Naive thymus-derived CD4-positive, alpha-beta T cell (primary cell): ENCODE measurements at regions of chr4 and their contacts with region 1.

Region 1: DNA sequence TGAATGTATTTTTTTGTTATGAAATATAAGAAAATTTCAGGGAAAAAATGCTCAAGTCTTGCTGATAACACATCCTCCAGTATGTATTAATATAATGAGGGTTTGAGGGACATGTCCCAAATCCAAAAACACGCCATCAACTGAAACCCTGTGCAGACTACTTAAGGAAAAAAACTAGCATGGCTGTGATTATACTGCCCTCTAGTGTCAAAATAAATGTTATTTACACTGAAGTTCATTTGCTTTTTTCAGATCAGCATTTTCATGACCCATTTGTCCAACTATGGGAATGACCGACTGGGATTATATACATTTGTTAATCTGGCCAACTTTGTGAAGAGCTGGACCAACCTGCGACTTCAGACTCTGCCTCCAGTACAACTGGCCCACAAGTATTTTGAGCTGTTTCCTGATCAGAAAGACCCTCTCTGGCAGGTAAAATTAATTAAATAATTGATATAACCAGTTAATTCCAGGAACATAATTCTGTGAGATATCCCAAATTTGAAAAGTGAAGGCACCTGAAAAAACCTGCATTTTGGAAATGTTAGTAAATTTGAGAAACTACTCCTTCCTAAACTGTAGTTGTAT is 128.5 kb downstream of the PRSS12 start:
- DNase-seq: peak in 4 of 9 donors; percentile 12 to 35 (median 28)
- ATAC-seq: peak; percentile 49
- H3K4me3 ChIP-seq: no peak overlapping the region
- H3K4me3 Mint-ChIP-seq: no peak overlapping the region
- H3K27ac ChIP-seq: no peak overlapping the region
- H3K27ac Mint-ChIP-seq: no peak overlapping the region
- H3K4me1 ChIP-seq: no peaks in the 10 kb centered on the region
- H3K4me1 Mint-ChIP-seq: no peaks in the 10 kb centered on the region
- H3K27me3 ChIP-seq: no peaks in the 10 kb centered on the region
- H3K27me3 Mint-ChIP-seq: peaks cover 0 to 17% (median 6%) of the 10 kb centered on the region in 5 donors

Region 2: DNA sequence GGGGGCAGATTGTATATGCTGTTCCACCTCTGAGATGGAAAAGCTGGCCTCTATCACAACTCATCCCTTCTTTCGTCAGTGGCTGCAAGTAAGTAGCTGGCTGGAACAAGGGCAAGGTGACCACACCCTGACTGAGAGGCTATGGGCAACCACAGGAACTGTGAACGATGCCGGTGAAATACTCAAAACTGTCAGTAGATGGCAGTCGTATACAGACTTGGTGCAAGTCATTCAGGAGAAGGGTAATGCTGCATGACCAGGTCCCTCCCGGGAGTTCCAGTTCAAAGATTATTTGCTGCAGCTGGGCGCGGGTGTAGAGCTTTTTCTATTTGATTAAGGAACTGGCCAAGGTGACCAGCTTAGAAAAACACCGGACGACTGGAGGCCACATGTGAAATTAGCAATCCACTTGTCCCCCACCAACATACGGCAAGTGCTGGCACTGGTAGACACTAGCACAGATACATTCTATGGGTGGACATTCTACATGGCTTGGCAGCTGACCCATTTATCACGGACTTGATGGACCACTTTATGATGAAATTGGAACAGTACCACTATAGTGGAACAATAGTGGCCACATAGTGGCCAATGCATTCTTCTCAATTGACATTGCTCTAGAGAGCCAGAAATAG is 1865.6 kb before region 1 on chr4:
- CTCF ChIA-PET with region 1: no interaction called
- POLR2A ChIA-PET with region 1: no interaction called
- intact Hi-C with region 1: loop called in 1 of 2 experiments (anchors 2 kb)
- DNase-seq: peak in 6 of 9 donors; percentile 1 to 37 (median 8)
- ATAC-seq: peak; percentile 75
- H3K4me3 ChIP-seq: no peak overlapping the region
- H3K4me3 Mint-ChIP-seq: no peak overlapping the region
- H3K27ac ChIP-seq: no peak overlapping the region
- H3K27ac Mint-ChIP-seq: no peak overlapping the region
- H3K4me1 ChIP-seq: no peaks in the 10 kb centered on the region
- H3K4me1 Mint-ChIP-seq: peaks cover 0 to 5% (median 0%) of the 10 kb centered on the region in 7 donors
- H3K27me3 ChIP-seq: no peaks in the 10 kb centered on the region
- H3K27me3 Mint-ChIP-seq: no peaks in the 10 kb centered on the region

Region 3: GRCh38 chr4:117447925-117448324 is 776.4 kb before region 1 on chr4:
- CTCF ChIA-PET with region 1: no interaction called
- POLR2A ChIA-PET with region 1: no interaction called
- intact Hi-C with region 1: loop called in 1 of 2 experiments (anchors 2 kb)
- DNase-seq: no peak
- ATAC-seq: no peak
- H3K4me3 ChIP-seq: no peak overlapping the region
- H3K4me3 Mint-ChIP-seq: no peak overlapping the region
- H3K27ac ChIP-seq: no peak overlapping the region
- H3K27ac Mint-ChIP-seq: no peak overlapping the region
- H3K4me1 ChIP-seq: no peaks in the 10 kb centered on the region
- H3K4me1 Mint-ChIP-seq: no peaks in the 10 kb centered on the region
- H3K27me3 ChIP-seq: no peaks in the 10 kb centered on the region
- H3K27me3 Mint-ChIP-seq: no peaks in the 10 kb centered on the region

Region 4: GRCh38 chr4:118076958-118077766 is 147.2 kb before region 1 on chr4:
- CTCF ChIA-PET with region 1: interaction called, 4 read pairs
- POLR2A ChIA-PET with region 1: no interaction called
- intact Hi-C with region 1: loop called in 1 of 2 experiments (anchors 1 kb)
- DNase-seq: peak in 2 of 9 donors; percentile 2 to 19
- ATAC-seq: peak; percentile 26
- H3K4me3 ChIP-seq: no peak overlapping the region
- H3K4me3 Mint-ChIP-seq: no peak overlapping the region
- H3K27ac ChIP-seq: no peak overlapping the region
- H3K27ac Mint-ChIP-seq: no peak overlapping the region
- H3K4me1 ChIP-seq: no peaks in the 10 kb centered on the region
- H3K4me1 Mint-ChIP-seq: peaks cover 0 to 5% (median 0%) of the 10 kb centered on the region in 7 donors
- H3K27me3 ChIP-seq: no peaks in the 10 kb centered on the region
- H3K27me3 Mint-ChIP-seq: peaks cover 0 to 7% (median 0%) of the 10 kb centered on the region in 5 donors

Region 5: DNA sequence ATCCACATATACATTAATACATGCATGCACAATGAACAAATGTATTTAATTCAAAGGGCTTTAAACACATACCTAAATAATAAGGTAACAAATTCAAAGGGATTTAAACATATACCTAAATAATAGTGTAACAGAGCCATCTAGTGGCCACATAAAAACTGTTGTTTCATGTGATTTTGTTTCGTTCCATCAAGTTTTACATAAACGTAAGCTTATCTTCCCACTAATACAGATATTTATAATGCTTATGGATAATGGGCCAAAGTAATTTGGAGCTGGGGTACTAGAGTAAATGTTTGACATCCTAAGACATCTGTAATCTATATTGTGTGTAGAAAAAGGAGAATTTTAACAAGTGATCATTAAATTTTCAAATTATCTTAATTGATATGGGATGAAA is 46.2 kb after region 1 on chr4:
- CTCF ChIA-PET with region 1: no interaction called
- POLR2A ChIA-PET with region 1: no interaction called
- intact Hi-C with region 1: loop called (anchors 2 kb)
- DNase-seq: peak in 6 of 9 donors; percentile 9 to 50 (median 34)
- ATAC-seq: peak; percentile 68
- H3K4me3 ChIP-seq: no peak overlapping the region
- H3K4me3 Mint-ChIP-seq: no peak overlapping the region
- H3K27ac ChIP-seq: no peak overlapping the region
- H3K27ac Mint-ChIP-seq: no peak overlapping the region
- H3K4me1 ChIP-seq: no peaks in the 10 kb centered on the region
- H3K4me1 Mint-ChIP-seq: peaks cover 0 to 5% (median 0%) of the 10 kb centered on the region in 7 donors
- H3K27me3 ChIP-seq: no peaks in the 10 kb centered on the region
- H3K27me3 Mint-ChIP-seq: peaks cover 0 to 4% (median 0%) of the 10 kb centered on the region in 5 donors